Activated CD4-positive, alpha-beta memory T cell treated with anti-CD3 and anti-CD28 coated beads for 36 hours (primary cell): ENCODE measurements at regions of chr3 and their contacts with region 1.

Region 1: GRCh38 chr3:142844339-142844977 is 44.4 kb downstream of the PCOLCE2 start:
- DNase-seq: no peak
- H3K4me3 Mint-ChIP-seq: no peak overlapping the region
- H3K27ac Mint-ChIP-seq: no peak overlapping the region
- H3K4me1 Mint-ChIP-seq: no peaks in the 10 kb centered on the region
- H3K27me3 Mint-ChIP-seq: peaks cover 4% of the 10 kb centered on the region

Region 2: DNA sequence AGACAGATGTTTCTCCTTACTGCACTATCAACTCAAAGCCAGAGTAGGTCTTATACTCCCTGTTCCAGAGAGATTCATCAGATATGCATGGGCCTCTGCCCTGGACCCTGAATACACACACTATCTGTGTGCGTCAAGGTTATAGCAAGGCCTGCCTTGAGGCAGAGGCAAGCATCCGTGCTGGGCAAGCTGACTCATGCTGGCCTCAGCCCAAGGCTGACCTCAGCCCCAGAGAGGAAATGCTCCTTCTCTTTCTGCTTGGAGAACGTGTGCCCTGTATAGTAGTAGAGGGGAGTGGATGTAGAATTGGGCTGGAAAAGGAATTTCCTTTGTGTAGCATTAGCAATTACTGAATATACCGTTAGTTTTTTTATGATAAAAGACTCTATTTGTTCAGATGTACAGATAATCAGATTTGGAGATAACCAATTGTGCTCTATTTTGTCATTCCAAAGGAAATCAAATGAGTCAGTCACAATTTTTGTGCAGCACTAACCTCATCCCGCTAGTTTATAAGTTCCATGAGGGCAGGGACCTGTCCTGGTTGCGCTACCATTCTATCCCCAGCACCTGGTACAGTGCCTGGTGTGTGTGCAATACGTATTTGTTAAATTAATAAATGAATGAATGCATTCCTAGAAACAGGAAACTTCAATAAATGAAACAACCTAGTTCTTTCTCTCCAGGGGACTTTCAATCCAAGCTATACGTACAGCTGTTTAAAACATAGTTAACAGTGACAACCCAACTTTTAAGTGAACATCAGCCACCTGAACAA is 132.4 kb after region 1 on chr3:
- CTCF ChIA-PET with region 1: no interaction called
- POLR2A ChIA-PET with region 1: no interaction called
- intact Hi-C with region 1: no loop called
- DNase-seq: no peak
- H3K4me3 Mint-ChIP-seq: no peak overlapping the region
- H3K27ac Mint-ChIP-seq: no peak overlapping the region
- H3K4me1 Mint-ChIP-seq: no peaks in the 10 kb centered on the region
- H3K27me3 Mint-ChIP-seq: peaks cover 15% of the 10 kb centered on the region

Region 3: GRCh38 chr3:142993958-142994442 is 149.5 kb after region 1 on chr3:
- CTCF ChIA-PET with region 1: no interaction called
- POLR2A ChIA-PET with region 1: no interaction called
- intact Hi-C with region 1: loop called (anchors 5 kb)
- DNase-seq: peak; percentile 75
- H3K4me3 Mint-ChIP-seq: no peak overlapping the region
- H3K27ac Mint-ChIP-seq: no peak overlapping the region
- H3K4me1 Mint-ChIP-seq: peaks cover 2% of the 10 kb centered on the region
- H3K27me3 Mint-ChIP-seq: peaks cover 7% of the 10 kb centered on the region